ENCODE measurements at regions of chr14 and their contacts with region 1.

Region 1: DNA sequence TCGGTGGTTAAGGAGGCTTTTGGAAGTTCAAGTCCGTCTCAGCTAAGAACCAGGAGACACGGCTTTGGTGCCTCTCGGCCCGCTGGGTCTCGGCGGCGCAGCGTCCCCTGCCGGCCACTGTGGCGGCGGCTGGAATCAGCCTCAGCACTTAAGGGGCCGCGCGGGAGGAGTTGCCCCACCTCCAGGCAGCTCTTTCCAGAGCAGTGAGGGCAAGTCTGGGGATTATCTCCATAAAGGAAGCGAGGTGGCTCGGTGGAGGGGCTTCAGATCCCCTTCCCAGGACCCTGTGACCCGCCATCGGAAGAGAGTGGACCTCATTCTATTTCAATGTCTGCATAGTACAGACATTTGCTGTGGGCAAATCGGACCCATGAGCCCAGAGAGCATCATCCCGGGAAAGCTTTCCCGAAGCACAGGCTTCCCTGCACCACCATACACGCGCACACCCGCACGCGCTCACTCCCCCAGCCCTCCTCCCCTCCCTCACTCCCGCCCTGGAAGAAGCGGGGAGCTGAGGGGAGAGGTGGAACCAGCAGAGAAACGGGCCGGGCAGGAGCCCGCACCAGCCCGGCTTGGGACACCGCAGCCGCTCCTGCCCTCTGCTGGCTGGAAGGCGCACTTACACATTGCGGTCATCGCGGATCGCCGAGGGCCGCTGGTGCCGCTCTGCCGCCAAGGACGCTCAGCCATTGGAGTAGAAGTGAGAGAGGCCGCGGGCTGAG is 15.9 kb downstream of the RNASE2 start:
- DNase-seq: peak; percentile 87
- CTCF ChIP-seq: peak; percentile 97

Region 2: DNA sequence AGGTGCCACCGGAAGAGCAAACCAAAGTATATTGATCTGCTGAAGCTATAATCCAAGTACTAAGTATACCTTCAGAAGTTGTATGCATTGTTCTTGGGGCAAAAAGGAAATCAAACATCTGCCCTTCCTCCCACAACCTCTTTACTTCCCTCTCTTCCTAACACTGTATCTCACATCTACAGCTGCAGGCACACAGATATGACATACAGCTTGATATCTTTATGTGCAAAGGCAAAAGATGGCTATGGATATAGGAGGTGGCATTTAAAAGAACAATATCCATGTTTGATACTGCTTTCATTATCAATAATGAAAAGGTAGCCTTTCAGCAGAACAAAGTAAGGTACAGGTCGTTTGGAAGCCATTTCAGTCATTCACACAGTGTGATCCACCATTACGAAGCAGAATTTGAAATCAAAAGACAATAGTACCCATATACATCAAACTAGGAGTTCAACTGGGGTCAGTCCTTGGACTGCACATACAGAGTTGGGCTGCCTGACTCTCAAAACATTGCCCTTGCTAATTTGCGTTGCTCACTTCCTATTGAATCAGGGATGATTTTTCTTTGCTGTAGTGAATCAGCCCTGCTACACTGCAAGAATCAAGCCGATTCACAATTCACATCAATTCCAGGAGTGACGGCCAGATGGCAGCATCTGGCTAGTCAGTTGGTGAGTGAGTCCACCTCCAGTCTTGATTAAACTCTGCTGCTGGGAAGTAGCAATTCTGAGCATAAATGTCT is 273.7 kb before region 1 on chr14:
- CTCF ChIA-PET with region 1: interaction called, 18 read pairs
- POLR2A ChIA-PET with region 1: no interaction called
- DNase-seq: peak; percentile 61
- CTCF ChIP-seq: peak; percentile 84

Region 3: GRCh38 chr14:20818861-20819260 is 152.3 kb before region 1 on chr14:
- CTCF ChIA-PET with region 1: no interaction called
- POLR2A ChIA-PET with region 1: no interaction called
- DNase-seq: no peak
- CTCF ChIP-seq: no peak

Region 4: GRCh38 chr14:20922474-20922873 is 48.7 kb before region 1 on chr14:
- CTCF ChIA-PET with region 1: no interaction called
- POLR2A ChIA-PET with region 1: no interaction called
- DNase-seq: no peak
- CTCF ChIP-seq: no peak

Region 5: GRCh38 chr14:20956376-20956976 is 14.7 kb before region 1 on chr14:
- CTCF ChIA-PET with region 1: interaction called, 87 read pairs
- POLR2A ChIA-PET with region 1: no interaction called
- DNase-seq: no peak
- CTCF ChIP-seq: no peak

Region 6: GRCh38 chr14:21003788-21004346 is 32.7 kb after region 1 on chr14:
- CTCF ChIA-PET with region 1: interaction called, 16 read pairs
- POLR2A ChIA-PET with region 1: no interaction called
- DNase-seq: no peak
- CTCF ChIP-seq: no peak

Region 7: GRCh38 chr14:21092273-21093011 is 121.3 kb after region 1 on chr14:
- CTCF ChIA-PET with region 1: interaction called, 10 read pairs
- POLR2A ChIA-PET with region 1: no interaction called
- DNase-seq: peak; percentile 92
- CTCF ChIP-seq: peak; percentile 100